Posterior cingulate gyrus (tissue), 11 donors: ENCODE measurements at regions of chr1 and their contacts with region 1.

Region 1: GRCh38 chr1:223811634-223812415 is 33.9 kb downstream of the TP53BP2 start:
- DNase-seq: no peak

Region 2: GRCh38 chr1:223731133-223731770 is 80.6 kb before region 1 on chr1:
- intact Hi-C with region 1: no loop called
- DNase-seq: peak; percentile 28 to 90 (median 58)

Region 3: DNA sequence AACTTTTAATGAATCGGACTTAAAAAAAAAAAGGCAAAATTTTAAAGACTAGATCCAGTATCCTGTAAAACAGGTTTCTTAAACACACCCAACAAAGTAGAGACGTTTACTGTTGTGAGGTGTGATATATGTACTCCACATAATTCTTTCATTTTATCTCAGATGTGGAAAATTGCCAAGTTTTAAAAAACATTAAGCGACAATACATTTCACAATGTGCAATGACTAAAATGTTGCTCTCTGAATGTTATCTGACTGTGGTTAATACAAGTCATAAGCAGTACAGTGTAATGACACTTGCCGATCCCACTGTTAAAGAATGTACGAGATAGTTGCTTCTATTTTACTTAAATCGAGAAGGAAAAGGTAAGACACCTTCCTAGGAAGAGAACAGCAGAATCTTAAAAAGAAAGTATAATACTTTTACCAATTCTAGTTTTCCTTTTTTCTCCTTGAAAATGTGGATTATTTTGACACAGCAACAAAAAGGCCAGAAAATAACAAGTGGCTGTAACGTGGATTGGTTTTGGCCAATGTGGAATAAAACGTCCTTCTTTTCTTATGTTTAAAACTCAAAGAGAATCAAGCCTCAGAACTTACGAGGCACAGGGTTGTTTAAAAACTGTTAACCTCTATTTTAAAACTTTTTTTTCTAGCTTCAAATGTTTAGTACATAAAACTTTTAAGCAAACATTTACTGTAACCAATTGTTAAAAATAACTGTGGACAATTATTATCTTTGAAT is 17.5 kb before region 1 on chr1:
- intact Hi-C with region 1: no loop called
- DNase-seq: no peak

Region 4: DNA sequence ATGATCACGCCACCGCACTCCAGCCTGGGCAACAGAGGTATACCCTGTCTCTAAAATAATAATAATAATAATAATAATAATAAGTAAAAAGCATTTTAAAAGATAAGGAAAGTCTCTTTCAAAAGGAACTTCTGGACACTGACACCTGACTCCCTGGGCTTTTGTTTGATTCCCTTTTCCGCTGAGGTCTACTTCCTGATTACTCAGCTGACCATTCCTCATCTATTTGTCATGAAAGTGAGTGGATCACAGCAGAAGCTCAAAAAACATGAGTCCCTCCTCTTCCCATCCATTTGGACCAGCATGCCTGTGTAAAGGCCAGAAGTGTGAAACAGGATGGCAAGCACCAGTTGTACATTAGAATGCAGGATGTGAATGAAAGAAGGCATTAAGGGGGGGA is 240.9 kb after region 1 on chr1:
- intact Hi-C with region 1: loop called (anchors 5 kb)
- DNase-seq: no peak

Region 5: GRCh38 chr1:224149713-224150112 is 337.9 kb after region 1 on chr1:
- intact Hi-C with region 1: no loop called
- DNase-seq: no peak